ENCODE measurements at regions of chr3 and their contacts with region 1.

Region 1: GRCh38 chr3:5057857-5058324 is 64.2 kb upstream of the ARL8B start:
- DNase-seq: peak; percentile 73
- ATAC-seq: peak; percentile 95

Region 2: GRCh38 chr3:4656059-4656458 is 401.8 kb before region 1 on chr3:
- intact Hi-C with region 1: loop called (anchors 5 kb)
- DNase-seq: peak; percentile 68
- ATAC-seq: peak; percentile 94

Region 3: GRCh38 chr3:4711689-4711992 is 346.2 kb before region 1 on chr3:
- intact Hi-C with region 1: loop called (anchors 1 kb)
- DNase-seq: no peak
- ATAC-seq: no peak

Region 4: DNA sequence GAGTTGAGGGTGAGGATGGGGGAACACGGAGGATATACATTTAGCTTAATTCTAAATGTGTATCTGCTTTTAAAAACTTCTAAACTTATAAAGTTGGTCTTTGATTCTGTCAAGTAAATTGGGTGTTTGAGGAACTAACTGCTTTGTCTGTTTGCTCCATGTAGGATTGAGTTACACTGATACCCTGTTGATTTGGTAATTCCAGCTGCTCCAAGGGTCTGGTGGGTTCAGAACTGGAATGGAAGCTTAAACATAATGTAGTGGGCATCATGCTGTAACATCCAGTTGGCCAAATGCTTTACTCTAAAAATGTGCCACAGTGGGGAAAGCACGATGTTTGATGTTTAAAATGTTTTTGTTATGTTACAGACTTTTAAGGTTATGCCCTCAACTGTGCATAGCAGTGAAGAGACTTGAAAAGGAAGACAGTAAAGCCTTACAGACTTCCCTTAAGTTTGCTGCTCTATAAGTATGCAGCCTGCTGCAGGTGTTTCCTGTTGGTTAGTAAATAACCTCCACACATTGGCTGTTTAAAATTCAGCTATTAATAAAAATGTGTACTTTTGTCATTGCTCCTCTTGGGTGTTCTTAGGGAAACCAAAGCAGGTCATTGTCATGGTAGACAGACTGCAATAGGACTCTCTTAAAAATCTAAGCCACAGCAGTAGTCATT is 123.7 kb after region 1 on chr3:
- intact Hi-C with region 1: no loop called
- DNase-seq: no peak
- ATAC-seq: no peak

Region 5: GRCh38 chr3:5390221-5390620 is 332.3 kb after region 1 on chr3:
- intact Hi-C with region 1: no loop called
- DNase-seq: no peak
- ATAC-seq: no peak

Measured in Right ventricle myocardium superior (tissue), 1 donor.